Panc1 (cell line): ENCODE measurements at regions of chr5 and their contacts with region 1.

Region 1: GRCh38 chr5:118902656-118903438 is 85.5 kb downstream of the DTWD2 start:
- DNase-seq: no peak
- ATAC-seq: no peak
- H3K4me3 ChIP-seq: no peak overlapping the region
- H3K27ac ChIP-seq: no peak overlapping the region
- H3K4me1 ChIP-seq: no peaks in the 10 kb centered on the region
- H3K27me3 ChIP-seq: no peaks in the 10 kb centered on the region
- CTCF ChIP-seq: no peak

Region 2: GRCh38 chr5:118863345-118863744 is 39.5 kb before region 1 on chr5:
- CTCF ChIA-PET with region 1: no interaction called
- POLR2A ChIA-PET with region 1: interaction called, 15 read pairs
- in situ Hi-C with region 1: no loop called
- intact Hi-C with region 1: no loop called
- DNase-seq: no peak
- ATAC-seq: no peak
- H3K4me3 ChIP-seq: no peak overlapping the region
- H3K27ac ChIP-seq: no peak overlapping the region
- H3K4me1 ChIP-seq: no peaks in the 10 kb centered on the region
- H3K27me3 ChIP-seq: no peaks in the 10 kb centered on the region
- CTCF ChIP-seq: no peak

Region 3: GRCh38 chr5:119212676-119213075 is 309.8 kb after region 1 on chr5:
- CTCF ChIA-PET with region 1: no interaction called
- POLR2A ChIA-PET with region 1: no interaction called
- in situ Hi-C with region 1: no loop called
- intact Hi-C with region 1: no loop called
- DNase-seq: no peak
- ATAC-seq: no peak
- H3K4me3 ChIP-seq: no peak overlapping the region
- H3K27ac ChIP-seq: no peak overlapping the region
- H3K4me1 ChIP-seq: no peaks in the 10 kb centered on the region
- H3K27me3 ChIP-seq: no peaks in the 10 kb centered on the region
- CTCF ChIP-seq: no peak